A673 (cell line): ENCODE measurements at regions of chr2 and their contacts with region 1.

Region 1: DNA sequence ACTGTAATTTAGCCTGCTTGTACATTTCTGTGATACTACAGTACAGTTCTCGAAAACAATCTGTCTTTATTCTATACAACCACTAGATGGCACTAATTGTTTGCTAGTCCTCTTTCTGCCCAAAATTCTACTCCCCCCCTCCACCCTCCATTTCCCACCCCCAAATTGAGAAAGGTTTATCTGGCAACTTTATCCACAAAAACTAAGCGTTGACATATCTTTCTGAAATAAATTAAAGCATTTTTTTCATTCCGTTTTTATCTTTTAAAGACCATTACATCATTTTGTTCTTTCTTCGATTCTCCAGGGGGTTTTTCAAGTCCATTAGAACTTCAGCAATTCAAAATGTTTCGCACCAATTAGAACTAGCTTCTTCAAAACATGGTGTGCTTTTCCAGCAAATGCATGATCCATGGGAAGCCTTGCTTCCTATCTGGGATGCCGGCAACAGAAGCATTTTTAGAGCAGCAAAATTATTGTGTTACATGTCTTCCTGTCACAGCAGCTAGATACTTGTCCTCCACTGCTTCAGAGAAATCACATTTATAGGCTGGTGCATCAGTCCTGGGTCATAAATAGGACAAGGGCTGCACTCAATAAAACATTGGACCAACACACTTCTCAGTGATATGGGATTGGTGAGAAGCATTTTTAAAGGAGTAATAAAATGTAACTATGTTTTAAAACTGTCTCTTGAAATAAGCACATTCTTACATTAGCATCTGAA is 241.3 kb downstream of the PAX3 start:
- DNase-seq: peak; percentile 64
- H3K4me3 ChIP-seq: no peak overlapping the region
- H3K27ac ChIP-seq: no peak overlapping the region
- H3K4me1 ChIP-seq: peaks cover 40% of the 10 kb centered on the region
- H3K27me3 ChIP-seq: no peaks in the 10 kb centered on the region
- CTCF ChIP-seq: peak; percentile 73

Region 2: GRCh38 chr2:222120933-222121332 is 63.4 kb after region 1 on chr2:
- CTCF ChIA-PET with region 1: interaction called, 3 read pairs
- POLR2A ChIA-PET with region 1: no interaction called
- intact Hi-C with region 1: loop called (anchors 2 kb)
- DNase-seq: peak; percentile 82
- H3K4me3 ChIP-seq: no peak overlapping the region
- H3K27ac ChIP-seq: no peak overlapping the region
- H3K4me1 ChIP-seq: peaks cover 46% of the 10 kb centered on the region
- H3K27me3 ChIP-seq: no peaks in the 10 kb centered on the region
- CTCF ChIP-seq: no peak

Region 3: GRCh38 chr2:222561817-222562645 is 504.5 kb after region 1 on chr2:
- CTCF ChIA-PET with region 1: no interaction called
- POLR2A ChIA-PET with region 1: no interaction called
- intact Hi-C with region 1: loop called (anchors 2 kb)
- DNase-seq: peak; percentile 85
- H3K4me3 ChIP-seq: no peak overlapping the region
- H3K27ac ChIP-seq: no peak overlapping the region
- H3K4me1 ChIP-seq: no peaks in the 10 kb centered on the region
- H3K27me3 ChIP-seq: no peaks in the 10 kb centered on the region
- CTCF ChIP-seq: peak; percentile 84

Region 4: GRCh38 chr2:222613715-222614331 is 556.3 kb after region 1 on chr2:
- CTCF ChIA-PET with region 1: interaction called, 4 read pairs
- POLR2A ChIA-PET with region 1: no interaction called
- intact Hi-C with region 1: loop called (anchors 1 kb)
- DNase-seq: peak; percentile 76
- H3K4me3 ChIP-seq: no peak overlapping the region
- H3K27ac ChIP-seq: no peak overlapping the region
- H3K4me1 ChIP-seq: peaks cover 7% of the 10 kb centered on the region
- H3K27me3 ChIP-seq: no peaks in the 10 kb centered on the region
- CTCF ChIP-seq: peak; percentile 86